MCF 10A (cell line): ENCODE measurements at regions of chr10 and their contacts with region 1.

Region 1: DNA sequence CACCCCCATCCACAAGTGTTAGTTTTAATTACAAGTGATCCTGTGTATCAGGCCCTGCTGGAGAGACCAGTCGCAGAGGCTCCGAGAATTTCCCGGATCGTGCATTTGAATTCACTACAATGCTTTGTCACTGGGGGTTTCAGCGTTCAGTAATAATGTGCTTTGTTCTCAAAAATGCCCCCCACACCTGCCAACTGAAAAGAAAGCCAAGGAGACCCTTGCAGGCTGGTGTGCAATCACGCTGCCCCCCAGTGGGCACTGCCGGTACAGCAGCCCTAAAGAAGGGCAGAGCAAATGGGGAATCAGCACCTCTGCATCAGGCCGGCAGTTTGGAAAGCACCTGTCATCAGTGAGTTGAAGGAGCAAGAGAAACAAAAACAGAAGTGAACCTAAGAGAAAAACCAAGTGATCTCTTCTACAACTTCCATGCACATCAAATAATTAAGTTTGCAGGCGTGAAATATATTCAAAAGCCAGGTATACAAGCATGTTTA is 177.6 kb downstream of the PARD3 start:
- DNase-seq: peak; percentile 51
- H3K4me3 Mint-ChIP-seq: no peak overlapping the region
- H3K27ac Mint-ChIP-seq: peak overlapping the region; percentile 2
- H3K4me1 Mint-ChIP-seq: peaks cover 40% of the 10 kb centered on the region
- H3K27me3 Mint-ChIP-seq: no peaks in the 10 kb centered on the region
- CTCF ChIP-seq: peak; percentile 98

Region 2: DNA sequence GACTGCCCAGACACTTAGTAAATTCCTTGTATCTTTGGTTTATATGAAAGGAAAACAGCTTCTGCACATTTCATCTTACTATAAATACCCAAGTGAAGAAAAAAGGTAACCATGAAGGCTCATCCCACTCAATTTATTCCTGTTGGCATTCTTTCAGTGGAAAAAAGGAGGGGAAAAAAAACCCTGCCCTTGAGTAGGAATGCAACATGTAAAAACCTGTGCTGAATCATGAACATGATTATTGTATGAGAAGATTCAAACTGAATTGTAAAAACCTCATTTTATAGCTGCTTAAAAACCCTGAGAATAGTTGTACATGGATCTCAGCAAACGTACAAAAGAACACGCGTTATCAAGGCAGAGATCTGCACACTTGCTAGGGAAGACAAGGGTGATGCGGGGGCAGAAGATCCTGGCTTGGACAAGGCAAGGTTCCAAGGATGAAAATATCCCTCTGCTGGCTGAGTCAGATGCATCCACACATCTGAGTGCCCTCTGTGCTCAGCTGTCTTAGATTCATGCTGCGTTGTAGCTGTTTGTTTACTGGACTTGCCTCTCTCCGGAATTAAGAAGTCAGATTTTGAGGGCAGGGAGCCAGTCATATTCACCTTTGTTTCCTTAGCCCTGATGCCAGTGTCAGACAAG is 480.6 kb before region 1 on chr10:
- CTCF ChIA-PET with region 1: no interaction called
- POLR2A ChIA-PET with region 1: no interaction called
- intact Hi-C with region 1: loop called (anchors 10 kb)
- DNase-seq: peak; percentile 74
- H3K4me3 Mint-ChIP-seq: peak overlapping the region; percentile 7
- H3K27ac Mint-ChIP-seq: peak overlapping the region; percentile 57
- H3K4me1 Mint-ChIP-seq: peaks cover 27% of the 10 kb centered on the region
- H3K27me3 Mint-ChIP-seq: no peaks in the 10 kb centered on the region
- CTCF ChIP-seq: peak; percentile 20

Region 3: DNA sequence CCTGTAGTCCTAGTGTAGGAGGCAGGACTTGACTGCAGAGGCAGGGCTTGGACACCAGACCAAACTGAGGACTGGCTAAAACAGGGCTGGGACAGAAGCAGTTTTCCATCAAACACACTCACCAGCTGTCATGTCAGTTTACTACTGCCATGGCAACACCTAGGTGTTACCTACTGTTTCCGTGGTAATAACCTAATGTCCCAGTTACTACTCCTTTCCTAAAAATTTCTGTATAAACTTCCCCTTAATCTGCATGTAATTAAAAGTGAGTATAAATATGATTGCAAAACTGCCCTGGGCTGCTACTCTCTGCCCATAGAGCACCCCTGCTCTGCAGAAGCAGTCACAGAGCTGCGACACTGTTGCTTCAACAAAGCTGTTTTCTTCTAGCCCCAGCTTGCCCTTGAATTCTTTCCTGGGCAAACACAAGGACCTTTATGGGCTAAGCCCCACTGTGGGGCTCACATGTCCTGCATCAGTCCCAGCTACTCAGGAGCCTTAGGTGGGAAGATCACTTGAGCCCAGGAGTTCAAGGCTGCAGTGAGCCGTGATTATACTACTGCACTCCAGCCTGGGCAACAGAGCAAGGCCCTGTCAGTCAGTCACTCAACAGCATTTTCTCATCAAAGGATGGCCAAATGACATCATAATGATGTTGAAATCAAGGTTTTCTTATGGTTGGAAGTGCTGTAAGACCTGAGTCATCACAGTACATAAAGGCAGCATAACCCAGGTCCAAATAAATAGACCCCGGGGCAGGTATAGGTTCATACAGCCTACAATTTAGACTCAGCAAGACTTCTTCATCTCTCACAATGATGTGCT is 163.7 kb before region 1 on chr10:
- CTCF ChIA-PET with region 1: no interaction called
- POLR2A ChIA-PET with region 1: no interaction called
- intact Hi-C with region 1: loop called (anchors 5 kb)
- DNase-seq: peak; percentile 88
- H3K4me3 Mint-ChIP-seq: no peak overlapping the region
- H3K27ac Mint-ChIP-seq: peak overlapping the region; percentile 73
- H3K4me1 Mint-ChIP-seq: peaks cover 35% of the 10 kb centered on the region
- H3K27me3 Mint-ChIP-seq: no peaks in the 10 kb centered on the region
- CTCF ChIP-seq: no peak

Region 4: GRCh38 chr10:34528320-34528719 is 109.1 kb before region 1 on chr10:
- CTCF ChIA-PET with region 1: interaction called, 4 read pairs
- POLR2A ChIA-PET with region 1: no interaction called
- intact Hi-C with region 1: loop called (anchors 1 kb)
- DNase-seq: peak; percentile 94
- H3K4me3 Mint-ChIP-seq: peak overlapping the region; percentile 72
- H3K27ac Mint-ChIP-seq: peak overlapping the region; percentile 88
- H3K4me1 Mint-ChIP-seq: peaks cover 43% of the 10 kb centered on the region
- H3K27me3 Mint-ChIP-seq: no peaks in the 10 kb centered on the region
- CTCF ChIP-seq: no peak

Region 5: DNA sequence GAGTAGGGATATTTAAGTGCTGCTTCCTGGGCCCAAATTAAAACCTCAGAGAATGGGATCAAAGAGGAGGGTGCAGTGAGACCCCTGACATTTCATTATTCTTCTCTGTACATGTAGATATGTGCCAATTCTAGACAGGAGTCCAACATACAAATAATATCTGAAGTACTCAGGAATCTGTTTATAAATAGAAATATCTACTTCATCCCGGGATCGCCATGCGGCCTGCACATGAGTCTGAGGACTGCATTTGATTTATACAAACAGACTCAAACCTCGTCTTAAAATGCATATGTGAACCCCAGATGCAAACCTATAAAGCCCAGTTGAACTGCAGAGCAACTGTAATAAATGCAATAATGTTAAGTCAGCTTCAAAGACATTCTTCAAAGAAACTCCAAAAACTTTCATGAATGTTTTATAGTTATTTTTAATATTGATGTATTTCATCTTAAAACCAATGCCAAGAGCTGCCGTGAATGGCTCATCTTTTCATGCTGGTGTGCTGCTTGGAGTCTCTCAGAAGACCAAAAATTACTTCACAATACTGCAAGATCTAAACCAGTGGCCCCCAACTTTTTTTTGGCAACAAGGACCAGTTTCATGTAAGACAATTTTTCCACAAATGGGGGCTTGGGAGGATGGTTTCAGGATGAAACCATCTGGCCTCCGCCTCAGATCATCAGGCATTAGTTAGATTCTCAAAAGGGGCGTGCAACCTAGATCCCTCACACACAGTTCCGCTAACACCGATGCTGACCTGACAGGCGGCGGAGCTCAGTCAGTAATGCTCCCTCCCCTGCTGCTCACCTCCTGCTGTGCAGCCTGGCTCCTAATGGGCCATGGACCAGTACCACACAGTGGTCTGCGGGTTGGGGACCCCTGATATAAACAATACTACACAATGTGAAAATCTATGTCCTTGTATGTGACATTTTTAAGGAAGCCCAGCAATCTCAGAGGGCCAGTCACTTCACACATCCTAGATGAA is 10.7 kb after region 1 on chr10:
- CTCF ChIA-PET with region 1: interaction called, 13 read pairs
- POLR2A ChIA-PET with region 1: no interaction called
- intact Hi-C with region 1: no loop called
- DNase-seq: no peak
- H3K4me3 Mint-ChIP-seq: no peak overlapping the region
- H3K27ac Mint-ChIP-seq: no peak overlapping the region
- H3K4me1 Mint-ChIP-seq: peaks cover 2% of the 10 kb centered on the region
- H3K27me3 Mint-ChIP-seq: no peaks in the 10 kb centered on the region
- CTCF ChIP-seq: no peak